Aorta (tissue), 5 donors: ENCODE measurements at regions of chr11 and their contacts with region 1.

Region 1: DNA sequence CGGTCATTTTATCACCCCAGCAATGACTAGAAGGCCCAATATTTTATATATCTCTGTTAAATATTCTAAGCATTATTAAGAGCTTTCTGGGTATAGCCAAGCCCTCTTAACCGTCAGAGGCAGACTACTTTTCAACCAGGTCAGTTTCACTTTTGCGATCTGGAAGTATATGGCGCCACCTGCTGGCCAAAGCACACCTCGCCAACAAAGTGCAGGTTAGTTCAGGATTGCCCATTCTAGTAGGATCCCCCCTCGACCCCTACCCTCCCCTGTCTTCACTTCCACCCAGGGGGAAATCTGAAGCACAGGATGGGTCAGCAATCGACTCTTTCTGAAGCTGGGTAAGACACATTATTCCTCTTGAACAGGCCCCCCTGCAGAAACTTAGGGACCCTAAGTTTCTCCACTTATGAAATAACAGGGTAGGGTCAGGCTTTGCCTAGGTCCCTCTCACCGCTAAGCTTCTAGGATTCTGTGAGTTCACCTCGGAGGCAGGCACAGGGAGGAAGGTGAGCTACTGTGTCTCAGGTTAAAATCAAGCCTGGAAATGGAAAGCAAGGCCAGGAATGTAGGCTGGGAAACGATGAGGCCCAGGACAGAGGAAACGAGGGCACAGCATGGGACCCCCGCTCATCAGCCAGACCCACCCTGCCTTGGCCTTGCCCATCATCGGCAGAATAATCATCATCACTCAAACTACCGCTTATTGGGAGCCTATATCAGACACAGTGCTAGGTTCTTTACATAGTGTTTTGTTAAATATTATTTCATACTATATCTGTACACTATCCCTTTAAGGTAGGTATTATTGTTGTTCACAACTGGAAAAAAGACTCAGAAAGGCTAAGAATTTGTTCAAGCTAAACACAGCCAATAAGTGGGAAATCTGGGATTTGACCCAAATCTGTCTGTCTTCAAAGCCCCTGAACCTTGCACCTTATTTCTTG is 35.6 kb downstream of the KCNJ1 start:
- DNase-seq: peak; percentile 85 to 93
- ATAC-seq: peak; percentile 89
- H3K4me3 ChIP-seq: no peak overlapping the region
- H3K27ac ChIP-seq: no peak overlapping the region
- H3K4me1 ChIP-seq: no peaks in the 10 kb centered on the region
- H3K27me3 ChIP-seq: no peaks in the 10 kb centered on the region

Region 2: DNA sequence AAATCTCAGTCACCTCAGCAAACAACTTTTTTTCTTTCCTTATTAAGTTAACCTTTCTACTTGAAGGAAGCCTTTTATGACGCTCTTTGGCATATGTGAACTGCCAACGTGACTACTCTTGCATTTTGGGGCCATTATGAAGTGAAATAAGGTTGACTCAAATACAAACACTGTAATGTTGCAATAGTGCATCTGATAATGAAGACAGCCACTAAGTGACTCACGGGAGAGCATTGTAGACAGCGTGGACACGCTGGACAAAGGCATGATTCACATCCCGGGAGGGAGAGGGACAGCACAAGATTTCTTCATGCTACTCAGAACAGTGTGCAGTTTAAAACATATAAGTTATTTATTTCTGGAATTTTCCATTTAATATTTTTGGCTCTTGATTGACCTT is 804.9 kb before region 1 on chr11:
- intact Hi-C with region 1: loop called (anchors 5 to 10 kb)
- DNase-seq: no peak
- ATAC-seq: no peak
- H3K4me3 ChIP-seq: no peak overlapping the region
- H3K27ac ChIP-seq: no peak overlapping the region
- H3K4me1 ChIP-seq: peaks cover 0 to 3% of the 10 kb centered on the region in 2 donors
- H3K27me3 ChIP-seq: no peaks in the 10 kb centered on the region

Region 3: DNA sequence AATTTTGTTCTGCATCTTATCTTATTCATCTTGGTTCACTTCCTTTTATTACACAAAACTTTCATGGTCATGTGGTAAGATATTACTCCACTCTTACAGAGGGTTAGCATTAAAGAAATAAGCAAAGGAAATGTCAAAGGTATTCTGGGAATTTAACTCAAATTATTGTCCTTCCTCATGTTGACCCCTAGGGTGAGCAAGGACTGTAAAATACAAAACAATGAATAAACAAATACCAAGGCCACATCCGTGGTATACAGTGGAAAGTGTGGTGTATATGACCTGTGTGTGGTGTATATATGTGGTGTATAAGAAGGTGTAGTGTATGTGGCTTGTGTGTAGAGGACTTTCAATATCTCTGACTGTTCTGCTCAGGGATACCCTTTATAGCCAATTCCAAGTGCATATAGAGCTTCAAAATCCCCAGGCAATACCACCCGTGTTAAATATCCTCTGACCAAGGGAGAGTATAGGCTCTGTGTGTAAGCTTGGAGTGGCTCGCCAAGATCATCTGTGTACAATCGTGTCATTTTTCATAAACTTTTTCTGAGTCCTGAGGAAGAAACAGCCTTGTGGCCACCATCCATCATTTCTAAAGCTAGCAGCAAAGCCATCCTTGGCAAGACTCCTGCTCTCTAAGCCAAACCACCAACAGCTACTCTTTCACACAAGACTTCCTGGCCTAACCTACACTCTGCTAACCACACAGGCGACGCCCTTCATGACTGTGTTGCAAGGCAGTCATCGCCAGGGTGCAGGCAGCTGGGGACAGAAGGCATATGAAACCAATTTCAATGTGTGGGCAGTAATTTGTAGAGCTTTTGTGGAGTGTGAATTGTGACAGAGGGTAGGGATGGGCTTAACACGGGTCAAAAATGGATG is 792.1 kb before region 1 on chr11:
- intact Hi-C with region 1: loop called in 1 of 2 experiments (anchors 10 kb)
- DNase-seq: peak in 1 of 2 donors; percentile 76
- ATAC-seq: no peak
- H3K4me3 ChIP-seq: no peak overlapping the region
- H3K27ac ChIP-seq: no peak overlapping the region
- H3K4me1 ChIP-seq: no peaks in the 10 kb centered on the region
- H3K27me3 ChIP-seq: no peaks in the 10 kb centered on the region

Region 4: GRCh38 chr11:128157423-128158298 is 673.8 kb before region 1 on chr11:
- intact Hi-C with region 1: loop called (anchors 5 kb)
- DNase-seq: no peak
- ATAC-seq: peak; percentile 88
- H3K4me3 ChIP-seq: peak overlapping the region in 1 of 2 donors; percentile 26
- H3K27ac ChIP-seq: no peak overlapping the region
- H3K4me1 ChIP-seq: no peaks in the 10 kb centered on the region
- H3K27me3 ChIP-seq: no peaks in the 10 kb centered on the region

Region 5: DNA sequence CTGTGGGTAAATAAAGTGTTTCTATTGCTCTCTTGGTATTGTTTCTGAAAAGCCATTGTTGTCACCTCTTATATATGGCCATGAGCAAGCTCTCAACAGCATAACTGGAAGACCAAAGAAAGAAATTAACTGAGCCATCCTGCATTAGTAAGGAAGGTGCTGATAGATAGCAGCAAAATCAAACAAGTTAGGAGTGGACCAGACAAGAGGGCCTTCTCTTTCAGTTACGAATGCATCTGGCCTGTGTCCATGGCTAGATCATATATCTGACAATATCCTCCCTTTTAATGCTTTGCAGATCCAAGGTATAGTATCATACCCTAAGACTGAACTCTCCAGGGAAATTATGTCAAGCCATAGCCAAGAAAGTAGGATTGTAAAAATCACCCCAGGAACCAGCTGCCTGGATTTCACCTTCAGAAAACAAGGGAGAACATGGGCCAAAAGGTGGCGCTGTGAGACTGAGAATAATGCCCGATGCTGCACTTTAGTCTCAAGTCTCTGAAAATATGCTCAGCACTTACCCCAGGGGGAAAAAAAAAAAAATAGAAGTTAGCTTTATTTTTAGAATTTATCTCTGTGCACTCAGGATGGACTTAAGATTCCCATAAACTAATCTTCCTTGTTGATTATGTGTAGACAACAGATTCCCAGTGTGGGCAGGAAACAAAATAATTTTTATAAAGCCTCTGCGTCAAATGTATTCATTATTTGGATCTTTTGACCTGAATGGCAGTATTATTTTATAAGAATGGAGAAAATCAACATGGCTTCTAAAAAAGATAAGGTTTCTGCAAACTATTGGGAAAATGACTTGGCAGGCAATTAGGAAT is 659.2 kb before region 1 on chr11:
- intact Hi-C with region 1: loop called (anchors 2 to 5 kb)
- DNase-seq: peak; percentile 84 to 91
- ATAC-seq: peak; percentile 83
- H3K4me3 ChIP-seq: no peak overlapping the region
- H3K27ac ChIP-seq: no peak overlapping the region
- H3K4me1 ChIP-seq: no peaks in the 10 kb centered on the region
- H3K27me3 ChIP-seq: peaks cover 0 to 2% of the 10 kb centered on the region in 2 donors

Region 6: DNA sequence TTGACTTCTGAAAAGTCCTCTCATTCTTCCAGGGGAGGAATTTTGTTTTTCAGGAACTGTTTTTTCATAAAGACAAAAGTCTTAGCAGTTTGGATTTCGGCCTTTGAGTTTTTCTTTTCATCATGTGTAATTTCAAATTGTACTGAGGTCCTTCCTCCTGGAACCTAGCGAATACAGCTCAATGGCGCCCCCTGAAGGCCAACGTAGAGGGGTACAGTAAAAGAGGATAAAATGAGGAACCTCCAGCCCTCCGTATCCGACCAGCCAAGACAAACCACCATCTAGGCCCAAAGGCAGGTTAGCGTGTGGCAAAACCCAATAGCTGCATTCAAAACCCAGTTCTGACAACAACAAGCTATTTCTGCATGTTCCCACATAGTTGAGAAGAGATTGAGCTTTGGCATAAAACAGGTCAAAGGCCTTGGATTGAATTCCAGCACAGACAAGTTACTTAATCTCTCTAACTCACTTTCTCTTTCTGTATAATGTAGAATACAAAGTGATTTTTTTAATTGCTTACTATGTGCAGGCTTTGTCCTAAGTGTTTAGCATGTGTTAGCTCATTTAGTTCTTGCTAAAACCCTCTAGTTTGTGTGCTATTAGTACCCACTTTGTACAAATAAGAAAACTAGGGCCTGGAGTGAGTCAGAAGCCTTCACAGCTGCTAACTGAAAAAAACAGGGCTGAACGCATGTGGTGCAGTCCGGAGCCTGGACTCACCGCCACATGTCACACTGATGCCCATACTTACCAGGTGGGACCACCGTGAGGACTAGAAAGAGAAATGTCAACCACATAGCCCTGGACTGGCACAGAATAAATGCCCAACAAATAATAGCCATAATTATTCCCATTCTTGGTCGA is 200.8 kb before region 1 on chr11:
- intact Hi-C with region 1: loop called (anchors 5 kb)
- DNase-seq: peak; percentile 95 to 97
- ATAC-seq: peak; percentile 92
- H3K4me3 ChIP-seq: no peak overlapping the region
- H3K27ac ChIP-seq: peak overlapping the region in 1 of 2 donors; percentile 2
- H3K4me1 ChIP-seq: no peaks in the 10 kb centered on the region
- H3K27me3 ChIP-seq: no peaks in the 10 kb centered on the region

Region 7: GRCh38 chr11:128776424-128777284 is 54.8 kb before region 1 on chr11:
- intact Hi-C with region 1: loop called (anchors 5 kb)
- DNase-seq: peak; percentile 58 to 83
- ATAC-seq: peak; percentile 55
- H3K4me3 ChIP-seq: no peak overlapping the region
- H3K27ac ChIP-seq: no peak overlapping the region
- H3K4me1 ChIP-seq: no peaks in the 10 kb centered on the region
- H3K27me3 ChIP-seq: no peaks in the 10 kb centered on the region

Region 8: GRCh38 chr11:128796270-128796669 is 35.2 kb before region 1 on chr11:
- intact Hi-C with region 1: no loop called
- DNase-seq: no peak
- ATAC-seq: no peak
- H3K4me3 ChIP-seq: no peak overlapping the region
- H3K27ac ChIP-seq: no peak overlapping the region
- H3K4me1 ChIP-seq: no peaks in the 10 kb centered on the region
- H3K27me3 ChIP-seq: no peaks in the 10 kb centered on the region